ENCODE measurements at regions of chr9 and their contacts with region 1.

Region 1: GRCh38 chr9:73719660-73720059 is 568.0 kb downstream of the ANXA1 start:
- DNase-seq: no peak
- H3K4me3 ChIP-seq: no peak overlapping the region
- H3K27ac ChIP-seq: no peak overlapping the region
- H3K4me1 ChIP-seq: no peaks in the 10 kb centered on the region
- H3K27me3 ChIP-seq: no peaks in the 10 kb centered on the region
- CTCF ChIP-seq: no peak
- POLR2A ChIP-seq: no peak

Region 2: DNA sequence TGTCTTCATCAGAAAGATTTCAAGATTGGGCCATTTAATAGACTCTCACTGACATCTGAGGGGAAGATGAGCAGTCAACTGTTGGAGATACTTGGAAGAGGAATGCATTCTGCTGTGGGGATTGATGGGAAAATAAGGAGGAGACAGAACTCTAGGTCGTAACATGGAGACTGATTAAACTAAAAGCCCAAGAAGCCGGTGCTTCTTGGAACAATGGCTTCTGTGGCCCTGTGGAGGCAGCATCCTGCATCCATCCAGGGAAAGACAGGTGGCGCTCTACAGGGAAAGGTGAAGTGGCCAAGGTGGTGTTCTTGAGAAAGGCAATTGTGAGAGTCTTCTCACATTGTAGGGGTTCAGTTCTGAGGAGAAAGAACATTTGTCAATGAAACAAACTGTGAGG is 1386.0 kb before region 1 on chr9:
- intact Hi-C with region 1: no loop called
- DNase-seq: no peak
- H3K4me3 ChIP-seq: no peak overlapping the region
- H3K27ac ChIP-seq: no peak overlapping the region
- H3K4me1 ChIP-seq: no peaks in the 10 kb centered on the region
- H3K27me3 ChIP-seq: no peaks in the 10 kb centered on the region
- CTCF ChIP-seq: no peak
- POLR2A ChIP-seq: no peak

Region 3: DNA sequence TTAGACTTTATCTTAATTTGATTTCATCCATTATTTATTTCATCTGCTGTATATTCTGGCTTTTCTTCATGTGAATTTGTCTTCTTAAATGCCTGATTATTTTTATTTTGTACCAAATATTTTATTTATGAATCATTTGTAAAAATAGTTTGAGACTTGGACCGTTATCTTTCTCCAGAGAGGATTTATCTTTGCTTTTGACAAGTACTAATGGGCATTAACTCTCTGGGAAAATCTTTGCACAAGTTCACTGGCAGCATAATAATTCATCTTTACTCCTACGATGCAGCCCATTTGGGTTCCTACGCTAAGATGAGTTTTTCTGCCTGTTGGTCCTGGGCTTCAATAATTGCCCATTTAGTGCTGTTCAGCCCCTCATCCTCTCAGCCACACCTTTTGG is 646.5 kb after region 1 on chr9:
- intact Hi-C with region 1: loop called (anchors 5 kb)
- DNase-seq: no peak
- H3K4me3 ChIP-seq: no peak overlapping the region
- H3K27ac ChIP-seq: no peak overlapping the region
- H3K4me1 ChIP-seq: no peaks in the 10 kb centered on the region
- H3K27me3 ChIP-seq: no peaks in the 10 kb centered on the region
- CTCF ChIP-seq: no peak
- POLR2A ChIP-seq: no peak